Upper lobe of right lung (tissue), 1 donor: ENCODE measurements at regions of chr6 and their contacts with region 1.

Region 1: GRCh38 chr6:107674995-107675738 is 148.9 kb downstream of the SCML4 start:
- DNase-seq: peak; percentile 94
- ATAC-seq: peak; percentile 97
- H3K4me3 ChIP-seq: peak overlapping the region; percentile 20
- H3K27ac ChIP-seq: no peak overlapping the region
- H3K4me1 ChIP-seq: peaks cover 15% of the 10 kb centered on the region
- H3K27me3 ChIP-seq: no peaks in the 10 kb centered on the region
- CTCF ChIP-seq: peak; percentile 86

Region 2: DNA sequence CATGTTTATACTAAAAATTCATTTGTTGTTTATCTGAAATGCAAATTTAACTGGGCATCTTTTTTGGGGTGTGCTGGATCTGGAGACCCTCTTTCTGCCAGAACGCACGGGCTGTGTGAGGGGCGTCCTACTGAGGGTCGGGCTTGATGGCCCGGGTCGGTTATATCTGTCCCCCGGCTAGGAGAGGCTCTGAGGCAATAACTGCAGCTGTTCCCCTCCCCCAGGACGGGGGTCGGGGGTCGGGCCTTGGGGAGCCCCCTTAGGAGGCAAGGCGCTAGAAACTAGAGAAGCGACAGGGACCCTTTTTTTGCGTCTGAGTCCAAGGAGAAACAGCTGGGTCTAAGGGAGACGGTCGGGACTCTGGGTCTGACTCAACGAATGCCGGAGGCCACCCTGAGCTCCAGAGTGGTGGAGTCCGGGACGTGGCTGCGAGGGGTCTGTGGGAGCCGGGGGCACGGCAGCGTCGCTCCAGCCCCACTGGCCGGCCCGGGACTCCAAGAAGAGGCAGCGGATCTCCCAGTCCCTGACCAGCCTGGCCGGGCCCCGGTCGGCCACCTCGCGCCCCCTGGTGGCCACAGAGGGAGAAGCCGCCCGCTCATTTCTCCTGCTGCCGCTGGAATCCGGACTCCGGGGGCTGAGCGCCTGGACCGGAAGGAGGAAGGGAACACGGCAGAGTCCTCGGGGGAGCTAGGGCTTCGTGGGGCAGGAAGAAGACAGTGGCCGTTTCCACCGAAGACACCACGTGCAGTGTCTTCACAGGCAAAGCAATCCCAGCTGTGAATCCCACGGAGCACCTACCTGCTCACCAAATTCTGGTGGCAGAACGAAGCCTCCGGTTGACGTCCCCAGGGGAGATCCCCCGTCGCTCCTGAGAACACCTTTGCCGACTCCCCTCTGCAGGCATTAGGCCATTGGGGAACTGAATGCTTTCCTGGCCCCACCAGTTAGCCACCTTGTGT is 173.0 kb after region 1 on chr6:
- intact Hi-C with region 1: loop called (anchors 10 kb)
- DNase-seq: peak; percentile 93
- ATAC-seq: peak; percentile 99
- H3K4me3 ChIP-seq: peak overlapping the region; percentile 46
- H3K27ac ChIP-seq: no peak overlapping the region
- H3K4me1 ChIP-seq: peaks cover 6% of the 10 kb centered on the region
- H3K27me3 ChIP-seq: peaks cover 5% of the 10 kb centered on the region
- CTCF ChIP-seq: peak; percentile 97